Endothelial cell of umbilical vein (primary cell): ENCODE measurements at regions of chr5 and their contacts with region 1.

Region 1: GRCh38 chr5:142151436-142152383 is 43.1 kb downstream of the NDFIP1 start:
- DNase-seq: peak; percentile 83
- H3K4me3 ChIP-seq: no peak overlapping the region
- H3K27ac ChIP-seq: peak overlapping the region; percentile 2
- H3K4me1 ChIP-seq: peaks cover 19% of the 10 kb centered on the region
- H3K27me3 ChIP-seq: no peaks in the 10 kb centered on the region
- CTCF ChIP-seq: peak; percentile 63 to 66
- POLR2A ChIP-seq: no peak

Region 2: GRCh38 chr5:142012792-142013388 is 138.8 kb before region 1 on chr5 and contains the start of gene GNPDA1:
- CTCF ChIA-PET with region 1: interaction called, 11 read pairs
- POLR2A ChIA-PET with region 1: no interaction called
- dilution Hi-C with region 1: no loop called
- intact Hi-C with region 1: no loop called
- DNase-seq: peak; percentile 67
- H3K4me3 ChIP-seq: peak within 1 kb of the TSS; percentile 51 to 80 (median 69)
- H3K27ac ChIP-seq: peak within 1 kb of the TSS; percentile 83
- H3K4me1 ChIP-seq: peaks cover 45% of the 10 kb centered on the region
- H3K27me3 ChIP-seq: no peaks in the 10 kb centered on the region
- CTCF ChIP-seq: peak in 1 of 2 donors; percentile 9
- POLR2A ChIP-seq: peak; percentile 88
- total RNA-seq, gene GNPDA1: 49.3 and 52.1 TPM in 2 replicates

Region 3: DNA sequence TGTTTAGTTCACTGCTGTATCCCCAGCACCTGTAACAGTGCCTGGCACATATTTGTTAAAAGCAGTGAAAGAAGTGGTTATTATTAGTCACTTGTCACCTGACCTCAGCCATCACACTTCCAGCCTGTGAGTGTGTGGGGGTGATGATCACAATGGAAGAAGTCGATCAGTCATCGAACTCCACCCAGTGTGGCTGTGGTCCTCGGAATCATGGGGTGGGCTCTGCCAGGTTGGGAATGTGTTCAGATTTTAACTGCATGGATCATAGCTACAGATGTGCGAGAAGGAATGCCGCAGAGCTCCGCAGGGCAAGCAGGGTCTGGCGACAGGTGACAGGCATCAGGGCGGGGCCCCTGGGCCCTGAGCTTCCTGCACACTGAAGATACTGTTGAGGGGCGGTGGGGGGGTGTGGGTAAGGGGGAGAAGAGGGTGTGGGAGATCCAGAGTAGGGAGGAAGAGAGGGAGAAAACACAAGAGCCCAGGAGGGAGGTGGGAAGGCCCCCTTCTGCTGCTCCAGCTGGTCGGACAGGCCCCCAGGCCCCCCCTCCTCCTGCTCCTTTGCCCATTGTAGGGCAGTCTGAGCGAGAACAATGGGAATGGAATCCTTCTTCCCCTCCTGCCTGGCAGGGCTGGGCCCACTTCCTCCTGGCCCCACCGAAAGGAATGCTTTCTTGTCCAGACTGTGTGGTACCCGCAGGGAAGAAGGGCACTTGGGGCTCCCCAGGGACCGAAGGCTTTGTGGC is 83.5 kb after region 1 on chr5:
- CTCF ChIA-PET with region 1: no interaction called
- POLR2A ChIA-PET with region 1: no interaction called
- dilution Hi-C with region 1: no loop called
- intact Hi-C with region 1: loop called (anchors 5 kb)
- DNase-seq: peak; percentile 65
- H3K4me3 ChIP-seq: no peak overlapping the region
- H3K27ac ChIP-seq: peak overlapping the region; percentile 19
- H3K4me1 ChIP-seq: peaks cover 15% of the 10 kb centered on the region
- H3K27me3 ChIP-seq: no peaks in the 10 kb centered on the region
- CTCF ChIP-seq: no peak
- POLR2A ChIP-seq: no peak

Region 4: DNA sequence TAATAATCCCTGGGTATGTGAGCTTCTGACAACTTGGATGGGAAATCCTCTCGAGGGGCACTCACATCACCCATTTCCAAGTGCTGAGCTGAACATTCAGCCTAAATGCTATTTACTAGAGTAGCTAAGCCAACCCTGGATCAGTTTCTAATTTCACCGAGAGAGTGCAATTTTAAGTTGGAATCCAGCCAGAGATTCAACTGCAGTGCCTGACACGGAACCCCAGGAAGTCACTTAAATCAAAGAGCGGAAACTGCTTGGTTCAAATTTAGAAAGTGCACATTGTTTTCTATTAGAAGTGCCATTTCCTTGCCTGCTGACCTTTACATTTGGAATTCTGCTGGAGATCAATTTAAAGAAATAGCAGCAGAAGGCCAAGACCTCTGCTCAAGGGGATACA is 164.3 kb after region 1 on chr5:
- CTCF ChIA-PET with region 1: interaction called, 23 read pairs
- POLR2A ChIA-PET with region 1: no interaction called
- dilution Hi-C with region 1: no loop called
- intact Hi-C with region 1: loop called (anchors 1 kb)
- DNase-seq: peak; percentile 82
- H3K4me3 ChIP-seq: no peak overlapping the region
- H3K27ac ChIP-seq: peak overlapping the region; percentile 57
- H3K4me1 ChIP-seq: peaks cover 68% of the 10 kb centered on the region
- H3K27me3 ChIP-seq: no peaks in the 10 kb centered on the region
- CTCF ChIP-seq: no peak
- POLR2A ChIP-seq: no peak

Region 5: DNA sequence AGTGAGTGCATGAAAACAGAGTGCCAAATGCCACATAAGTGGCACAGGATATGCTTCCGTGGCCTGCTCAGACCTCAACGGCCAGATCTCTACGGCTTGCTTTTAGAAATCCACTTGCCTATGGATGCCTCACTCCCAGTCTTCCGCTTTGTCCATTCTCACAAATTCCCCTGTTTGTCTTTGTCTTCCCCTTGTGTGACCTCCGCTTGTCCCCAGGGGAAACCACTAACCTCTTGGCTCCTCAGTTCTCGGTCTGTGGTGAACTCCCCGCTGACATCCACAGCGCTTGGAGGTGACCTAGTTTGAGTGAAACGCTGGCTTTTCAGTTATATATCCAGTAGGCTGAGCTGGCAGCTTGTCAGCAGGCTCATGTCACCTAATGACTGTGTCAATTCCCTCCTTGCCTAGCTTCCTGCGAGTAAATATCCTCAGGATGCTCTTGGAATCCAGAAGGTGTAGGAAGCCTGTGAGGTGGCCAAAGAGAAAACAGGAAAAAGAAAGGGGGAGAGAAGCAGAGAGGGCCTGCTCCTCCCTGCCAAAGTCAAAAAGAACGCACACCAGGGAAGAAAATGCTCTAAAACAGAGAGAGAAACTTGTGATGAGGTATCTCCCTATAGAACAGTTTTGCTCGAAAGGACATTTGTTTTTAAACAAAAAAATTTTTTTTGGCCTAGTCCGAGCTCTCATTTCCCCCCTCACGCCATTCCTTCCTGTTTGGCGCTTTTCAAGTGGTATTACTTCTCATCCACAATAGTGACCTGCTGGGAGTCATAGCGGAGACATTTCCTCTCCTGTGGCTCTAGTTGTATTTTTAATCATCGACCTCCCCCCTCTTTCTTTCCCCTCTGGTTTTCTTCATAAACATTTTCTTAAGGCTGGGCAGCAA is 274.7 kb after region 1 on chr5:
- CTCF ChIA-PET with region 1: interaction called, 3 read pairs
- POLR2A ChIA-PET with region 1: no interaction called
- dilution Hi-C with region 1: no loop called
- intact Hi-C with region 1: loop called (anchors 2 kb)
- DNase-seq: peak; percentile 85
- H3K4me3 ChIP-seq: peak overlapping the region in 1 of 3 experiments; percentile 38
- H3K27ac ChIP-seq: peak overlapping the region; percentile 70
- H3K4me1 ChIP-seq: peaks cover 44% of the 10 kb centered on the region
- H3K27me3 ChIP-seq: no peaks in the 10 kb centered on the region
- CTCF ChIP-seq: no peak
- POLR2A ChIP-seq: peak; percentile 64

Region 6: DNA sequence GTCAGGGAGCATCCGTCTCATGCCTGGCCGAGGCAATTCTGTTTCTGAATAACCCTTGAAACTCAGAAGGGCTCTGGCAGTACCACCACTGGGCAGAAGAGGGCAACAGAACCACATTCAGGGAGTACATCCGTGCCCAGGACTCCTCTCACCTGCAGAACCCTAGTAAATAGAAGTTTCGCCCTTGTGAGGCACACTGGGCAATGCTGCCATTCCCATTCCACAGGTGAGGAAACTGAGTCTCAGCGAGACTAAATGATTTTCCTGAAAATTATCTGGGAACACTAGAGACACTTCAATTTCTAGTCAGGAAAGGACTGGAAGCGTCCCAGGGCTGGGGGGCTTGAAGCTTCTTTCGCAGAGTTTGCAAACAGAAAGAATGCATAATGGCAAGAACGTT is 459.4 kb after region 1 on chr5:
- CTCF ChIA-PET with region 1: no interaction called
- POLR2A ChIA-PET with region 1: no interaction called
- dilution Hi-C with region 1: no loop called
- intact Hi-C with region 1: loop called (anchors 1 kb)
- DNase-seq: peak; percentile 74
- H3K4me3 ChIP-seq: no peak overlapping the region
- H3K27ac ChIP-seq: no peak overlapping the region
- H3K4me1 ChIP-seq: no peaks in the 10 kb centered on the region
- H3K27me3 ChIP-seq: peaks cover 2 to 27% of the 10 kb centered on the region in 2 experiments
- CTCF ChIP-seq: peak; percentile 87 to 90
- POLR2A ChIP-seq: no peak

Region 7: GRCh38 chr5:143244000-143244736 is 1092.5 kb after region 1 on chr5:
- CTCF ChIA-PET with region 1: no interaction called
- POLR2A ChIA-PET with region 1: no interaction called
- dilution Hi-C with region 1: no loop called
- intact Hi-C with region 1: no loop called
- DNase-seq: peak; percentile 60
- H3K4me3 ChIP-seq: no peak overlapping the region
- H3K27ac ChIP-seq: peak overlapping the region; percentile 61
- H3K4me1 ChIP-seq: peaks cover 30% of the 10 kb centered on the region
- H3K27me3 ChIP-seq: no peaks in the 10 kb centered on the region
- CTCF ChIP-seq: no peak
- POLR2A ChIP-seq: no peak